AG04449 (cell line): ENCODE measurements at regions of chr20 and their contacts with region 1.

Region 1: DNA sequence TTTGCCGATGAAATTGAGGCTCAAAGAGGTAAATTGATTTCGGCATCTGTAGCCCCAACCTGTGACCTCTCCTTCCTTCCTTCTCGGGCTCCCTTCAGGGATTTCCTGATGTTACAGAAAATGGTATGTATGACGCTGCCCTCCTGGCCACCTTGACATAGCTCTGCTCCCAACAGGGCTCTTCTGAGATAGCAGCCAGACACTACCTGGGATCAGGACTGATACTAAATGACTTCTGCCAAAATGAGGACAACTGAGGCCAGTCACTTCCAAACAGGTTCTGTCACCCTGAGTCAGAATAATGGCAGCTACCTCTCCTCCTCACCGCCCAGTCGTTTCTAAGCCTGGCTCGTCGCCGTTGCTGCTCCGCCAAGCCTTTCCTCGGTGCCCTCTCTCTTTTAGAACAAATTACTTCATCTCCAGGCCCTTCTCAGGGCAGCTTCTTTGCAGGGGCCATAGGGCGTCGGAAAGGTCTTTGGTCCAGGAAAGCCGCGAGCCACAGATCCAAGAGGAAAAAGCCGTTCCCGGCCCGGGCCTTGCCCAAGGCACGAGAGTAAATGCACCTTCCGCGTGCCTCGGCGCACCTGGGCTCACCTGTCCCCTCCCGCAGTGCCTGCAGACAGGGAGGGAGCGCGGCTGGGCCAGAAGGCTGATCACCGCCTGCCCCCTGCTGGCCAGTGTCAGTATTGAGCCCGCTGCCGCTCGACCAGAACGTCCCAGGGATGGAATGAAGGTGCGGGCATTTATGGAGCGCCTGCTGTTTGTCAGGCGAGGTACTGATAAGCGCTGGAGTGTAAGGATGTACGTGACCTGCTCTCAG is 904 bp upstream of the LPIN3 start:
- DNase-seq: no peak
- H3K4me3 ChIP-seq: peak overlapping the region; percentile 63
- CTCF ChIP-seq: peak; percentile 96

Region 2: GRCh38 chr20:40990542-40991120 is 349.1 kb before region 1 on chr20:
- CTCF ChIA-PET with region 1: interaction called, 20 read pairs
- POLR2A ChIA-PET with region 1: no interaction called
- DNase-seq: no peak
- H3K4me3 ChIP-seq: no peak overlapping the region
- CTCF ChIP-seq: peak; percentile 90

Region 3: GRCh38 chr20:41173161-41173721 is 166.5 kb before region 1 on chr20:
- CTCF ChIA-PET with region 1: interaction called, 404 read pairs
- POLR2A ChIA-PET with region 1: no interaction called
- DNase-seq: no peak
- H3K4me3 ChIP-seq: no peak overlapping the region
- CTCF ChIP-seq: peak; percentile 98

Region 4: DNA sequence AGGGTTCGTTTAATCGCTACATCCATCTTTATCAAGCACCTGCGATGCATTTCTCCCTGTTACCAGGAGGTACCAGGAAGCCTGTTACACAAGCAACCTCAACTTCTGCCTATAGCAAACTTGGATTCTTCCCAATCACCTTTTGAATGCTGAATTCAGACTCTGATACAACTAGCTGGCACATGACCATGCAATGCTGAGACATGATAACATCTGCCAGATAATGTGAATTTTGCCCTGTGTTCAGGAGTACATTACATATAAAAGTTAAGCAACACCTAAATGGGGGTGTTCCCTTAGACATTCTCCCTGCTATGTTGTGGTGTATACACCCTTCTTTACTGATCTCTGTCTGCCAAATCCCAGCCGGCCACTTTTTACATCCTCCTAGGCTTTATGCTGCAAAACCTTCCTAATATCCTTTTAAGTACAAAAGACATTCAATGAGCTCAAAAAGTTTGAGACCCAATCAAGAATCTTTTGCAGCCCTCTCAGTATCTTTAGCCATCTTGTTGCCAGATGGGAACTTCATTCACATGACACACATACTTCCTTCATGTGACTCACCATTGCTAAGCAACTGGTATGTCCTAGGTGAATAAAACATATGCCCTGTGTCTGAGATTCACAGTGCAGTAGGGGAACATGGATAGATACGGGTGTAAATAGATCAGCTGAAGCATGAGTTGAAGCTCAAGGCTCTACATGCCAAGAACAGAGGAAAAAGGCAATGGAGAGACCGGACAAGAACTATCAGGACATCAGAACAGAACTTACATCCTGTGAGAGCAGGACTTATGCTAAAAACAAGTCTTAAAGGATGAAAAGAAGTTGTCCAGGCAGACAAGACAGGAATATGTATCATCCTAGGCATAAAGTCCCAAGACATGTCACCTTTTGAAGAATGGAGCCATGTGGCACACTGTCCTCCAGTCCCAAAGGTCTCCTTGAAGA is 106.5 kb before region 1 on chr20:
- CTCF ChIA-PET with region 1: interaction called, 61 read pairs
- POLR2A ChIA-PET with region 1: interaction called, 7 read pairs
- DNase-seq: peak; percentile 77
- H3K4me3 ChIP-seq: peak overlapping the region; percentile 23
- CTCF ChIP-seq: no peak

Region 5: DNA sequence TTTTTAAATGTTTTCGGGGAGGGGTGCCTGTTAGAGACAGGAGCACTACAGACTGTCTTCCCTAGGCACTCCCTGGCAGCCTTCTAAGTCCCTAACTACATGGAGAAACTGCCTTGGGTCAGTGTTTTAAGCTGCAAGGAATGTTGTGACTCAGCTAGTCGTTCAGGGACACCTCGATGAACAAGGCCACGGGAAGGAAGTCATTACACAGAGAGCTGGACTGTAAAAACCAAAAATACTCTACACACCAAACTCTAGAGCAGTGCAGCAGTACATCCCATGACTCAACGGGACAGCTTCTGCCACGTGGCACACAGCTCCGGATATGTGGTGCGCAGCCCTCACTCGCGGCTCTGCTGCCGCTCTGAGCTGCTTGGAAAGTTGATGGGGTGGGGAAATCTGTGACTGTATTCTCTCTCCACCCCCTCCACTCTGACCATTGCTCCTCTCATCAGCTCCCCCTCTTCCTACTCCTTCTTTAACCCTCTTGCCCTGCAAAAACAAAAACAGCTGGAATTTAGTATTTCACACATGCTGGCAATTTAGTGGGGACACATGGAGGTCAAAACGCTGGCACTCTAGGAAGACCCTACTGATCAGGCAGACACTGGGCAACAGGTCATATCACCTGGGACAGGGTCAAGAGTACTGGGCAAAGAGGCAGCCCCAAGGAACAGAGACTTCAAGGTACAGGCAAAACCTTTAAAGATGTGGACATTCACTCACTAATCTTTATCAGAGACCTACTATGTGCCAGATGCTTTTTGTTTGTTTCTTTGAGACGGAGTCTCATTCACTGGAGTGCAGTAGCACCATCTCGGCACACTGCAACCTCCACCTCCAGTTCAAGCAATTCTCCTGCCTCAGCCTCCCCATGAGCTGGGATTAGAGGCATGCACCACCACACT is 10.0 kb before region 1 on chr20:
- CTCF ChIA-PET with region 1: interaction called, 61 read pairs
- POLR2A ChIA-PET with region 1: interaction called, 8 read pairs
- DNase-seq: peak; percentile 98
- H3K4me3 ChIP-seq: no peak overlapping the region
- CTCF ChIP-seq: no peak

Region 6: GRCh38 chr20:41443691-41444090 is 104.0 kb after region 1 on chr20:
- CTCF ChIA-PET with region 1: no interaction called
- POLR2A ChIA-PET with region 1: no interaction called
- DNase-seq: no peak
- H3K4me3 ChIP-seq: no peak overlapping the region
- CTCF ChIP-seq: no peak

Region 7: GRCh38 chr20:41475507-41475906 is 135.8 kb after region 1 on chr20:
- CTCF ChIA-PET with region 1: no interaction called
- POLR2A ChIA-PET with region 1: no interaction called
- DNase-seq: no peak
- H3K4me3 ChIP-seq: no peak overlapping the region
- CTCF ChIP-seq: no peak